K562 (cell line): ENCODE measurements at regions of chr10 and their contacts with region 1.

Region 1: GRCh38 chr10:102503281-102504220 is at the start of gene SUFU:
- DNase-seq: peak; percentile 94 to 98 (median 96)
- ATAC-seq: peak; percentile 87
- H3K4me3 ChIP-seq: peak within 1 kb of the TSS; percentile 86
- H3K27ac ChIP-seq: peak within 1 kb of the TSS; percentile 87
- H3K4me1 ChIP-seq: peaks cover 4 to 13% of the 10 kb centered on the region in 2 experiments; a peak in 4 of 5 replicates
- H3K27me3 ChIP-seq: no peaks in the 10 kb centered on the region
- CTCF ChIP-seq: peak; percentile 77 to 90 (median 84)
- EP300 ChIP-seq: no peak
- POLR2A ChIP-seq: no peak; the same call in 1 of the 2 replicates
- RAD21 ChIP-seq: peak; percentile 52 to 74
- polyA plus RNA-seq, gene SUFU: 0.59 to 0.78 TPM

Region 2: DNA sequence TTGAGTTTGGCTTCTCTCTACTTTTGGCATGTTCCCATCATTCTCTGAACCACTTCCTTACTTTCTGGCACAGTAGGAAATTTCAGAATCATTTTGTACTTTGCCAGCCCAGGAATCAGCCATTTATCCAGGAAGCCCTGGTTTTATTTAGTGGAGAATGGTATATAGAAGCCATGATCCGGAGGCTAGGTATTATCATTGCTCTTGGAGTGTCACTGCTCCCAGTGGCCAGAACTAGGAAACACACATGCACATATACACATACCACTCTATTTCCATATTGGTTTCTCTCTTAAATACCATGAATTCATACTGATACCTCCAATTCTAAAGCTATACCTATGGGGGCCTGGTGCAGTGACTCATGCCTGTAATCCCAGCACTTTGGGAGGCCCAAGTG is 36.5 kb after region 1 on chr10:
- CTCF ChIA-PET with region 1: no interaction called
- POLR2A ChIA-PET with region 1: no interaction called
- in situ Hi-C with region 1: no loop called
- intact Hi-C with region 1: loop called (anchors 2 kb)
- DNase-seq: peak; percentile 23 to 39 (median 31)
- ATAC-seq: peak; percentile 94
- H3K4me3 ChIP-seq: no peak overlapping the region
- H3K27ac ChIP-seq: no peak overlapping the region
- H3K4me1 ChIP-seq: no peaks in the 10 kb centered on the region; a peak in 1 of 5 replicates
- H3K27me3 ChIP-seq: no peaks in the 10 kb centered on the region
- CTCF ChIP-seq: peak; percentile 11 to 50 (median 41); a peak in 3 of 6 replicates
- EP300 ChIP-seq: no peak
- POLR2A ChIP-seq: no peak
- RAD21 ChIP-seq: peak in 1 of 2 experiments; percentile 38; a peak in 2 of 4 replicates

Region 3: DNA sequence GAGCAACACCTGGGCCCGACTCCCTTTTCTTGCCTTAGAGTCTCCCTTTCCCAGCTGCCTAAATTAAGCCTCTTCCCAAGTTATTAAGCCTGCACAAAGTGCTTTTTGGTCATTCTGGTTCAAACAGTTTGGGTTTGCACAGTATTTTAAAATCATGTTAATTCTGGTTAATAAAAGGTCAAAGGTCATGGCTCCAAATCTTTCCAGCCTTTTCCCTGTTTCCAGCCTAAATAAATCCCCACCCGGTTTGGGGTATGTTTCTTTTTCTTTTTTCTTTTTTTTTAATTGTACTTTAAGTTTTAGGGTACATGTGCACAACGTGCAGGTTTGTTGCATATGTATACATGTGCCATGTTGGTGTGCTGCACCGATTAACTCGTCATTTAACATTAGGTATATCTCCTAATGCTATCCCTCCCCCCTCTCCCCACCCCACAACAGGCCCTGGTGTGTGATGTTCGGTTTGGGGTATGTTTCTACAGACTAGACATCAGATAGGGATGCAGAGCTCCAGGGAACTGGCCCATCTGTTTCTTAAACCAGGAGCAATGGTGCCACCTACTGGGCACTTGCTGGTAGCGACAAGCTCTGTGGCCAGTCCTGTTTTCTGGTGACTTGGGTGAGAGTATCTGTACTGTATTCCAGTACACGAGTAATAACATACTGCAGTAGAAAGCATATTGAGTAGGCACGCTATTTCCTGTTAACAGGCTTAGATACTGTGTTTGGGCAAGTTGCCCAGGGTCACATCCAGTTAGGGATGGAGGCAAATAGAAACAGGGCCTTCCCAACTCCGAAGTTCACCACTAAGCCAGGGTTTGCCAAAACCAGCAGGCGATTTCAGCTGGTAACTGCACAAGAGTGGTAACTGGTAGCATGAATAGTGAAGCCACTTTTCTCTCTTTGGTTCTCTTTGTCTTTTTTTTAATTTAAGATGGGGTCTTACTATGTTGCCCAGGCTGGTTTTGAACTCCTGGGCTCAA is 80.2 kb after region 1 on chr10:
- CTCF ChIA-PET with region 1: interaction called, 6 read pairs
- POLR2A ChIA-PET with region 1: interaction called, 6 read pairs
- in situ Hi-C with region 1: loop called (anchors 5 kb)
- intact Hi-C with region 1: loop called (anchors 1 kb)
- DNase-seq: peak; percentile 82 to 88 (median 84)
- ATAC-seq: peak; percentile 99
- H3K4me3 ChIP-seq: no peak overlapping the region
- H3K27ac ChIP-seq: no peak overlapping the region
- H3K4me1 ChIP-seq: peaks cover 0 to 3% of the 10 kb centered on the region in 2 experiments; a peak in 2 of 5 replicates
- H3K27me3 ChIP-seq: no peaks in the 10 kb centered on the region
- CTCF ChIP-seq: peak; percentile 70 to 85 (median 77)
- EP300 ChIP-seq: no peak
- POLR2A ChIP-seq: no peak
- RAD21 ChIP-seq: peak; percentile 71 to 82

Region 4: DNA sequence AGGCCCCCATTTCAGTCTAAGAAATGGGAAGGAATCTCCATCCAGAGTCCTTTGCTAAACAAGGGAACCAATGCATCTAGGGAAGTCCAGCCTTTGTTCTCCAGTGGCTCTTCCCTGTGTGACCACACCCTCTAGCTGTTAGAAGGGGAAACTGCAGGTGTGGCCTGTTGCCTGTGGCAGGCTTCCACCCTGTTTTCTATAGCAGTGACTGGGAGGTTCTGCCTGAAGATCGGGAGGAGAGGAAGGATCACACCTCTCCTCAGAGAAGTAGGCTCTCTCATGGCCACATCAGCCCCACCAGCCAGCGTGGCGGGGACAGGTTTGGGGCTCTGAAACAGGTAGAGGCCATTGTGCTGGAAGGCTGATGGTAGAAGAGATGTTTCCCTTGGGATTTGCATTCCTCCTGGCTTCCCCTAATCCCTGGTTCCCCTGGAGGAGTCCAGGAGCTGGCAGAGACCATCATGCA is 93.0 kb after region 1 on chr10:
- CTCF ChIA-PET with region 1: no interaction called
- POLR2A ChIA-PET with region 1: no interaction called
- in situ Hi-C with region 1: no loop called
- intact Hi-C with region 1: loop called (anchors 5 kb)
- DNase-seq: peak; percentile 57 to 72 (median 61)
- ATAC-seq: peak; percentile 78
- H3K4me3 ChIP-seq: no peak overlapping the region
- H3K27ac ChIP-seq: peak overlapping the region; percentile 26; the same call in 1 of the 3 replicates
- H3K4me1 ChIP-seq: peaks cover 34 to 39% of the 10 kb centered on the region in 2 experiments
- H3K27me3 ChIP-seq: no peaks in the 10 kb centered on the region
- CTCF ChIP-seq: peak; percentile 78 to 85 (median 84)
- EP300 ChIP-seq: no peak
- POLR2A ChIP-seq: no peak
- RAD21 ChIP-seq: peak; percentile 47 to 75; a peak in 3 of 4 replicates

Region 5: DNA sequence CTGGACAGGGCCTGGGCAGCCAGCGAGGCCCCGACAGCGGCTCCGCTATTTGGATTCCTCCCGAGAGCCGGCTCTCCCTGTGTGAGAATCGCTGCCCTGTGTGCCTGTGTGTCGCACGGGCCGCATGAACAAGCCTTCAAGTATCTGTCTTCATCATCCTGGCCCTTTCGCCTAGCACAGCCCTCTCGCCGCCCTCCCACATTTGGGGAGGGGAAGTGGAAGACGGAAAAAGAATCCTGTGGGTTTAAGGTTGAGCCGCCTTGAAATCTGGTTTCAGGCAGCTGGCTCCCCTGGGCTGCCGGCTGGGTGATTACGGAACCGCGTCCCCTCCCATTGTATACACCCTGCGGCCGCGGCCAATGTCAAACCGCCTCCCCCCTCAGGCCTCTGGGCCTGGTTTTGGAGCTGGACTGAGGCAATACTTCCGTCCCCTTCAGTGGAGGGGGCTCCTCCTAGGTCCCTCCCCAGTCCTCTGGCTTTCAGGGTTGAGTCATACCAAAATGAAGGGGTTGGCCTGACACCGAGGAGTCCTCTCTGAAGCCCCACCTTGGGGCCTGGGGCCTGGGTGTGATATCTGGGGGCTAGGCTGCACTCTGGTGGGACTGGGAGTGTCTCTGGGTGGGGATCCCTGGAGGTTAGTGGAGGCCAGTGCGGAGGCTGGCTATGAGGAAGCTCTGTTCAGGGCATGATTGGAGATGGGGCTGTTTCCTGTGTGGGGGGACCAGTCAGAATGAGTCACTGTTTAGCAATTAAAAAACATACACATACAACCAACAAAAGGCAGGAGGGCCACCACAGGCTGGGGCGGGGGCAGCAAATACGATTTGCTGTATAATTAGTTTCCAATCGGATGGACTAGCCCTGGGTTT is 142.4 kb after region 1 on chr10:
- CTCF ChIA-PET with region 1: no interaction called
- POLR2A ChIA-PET with region 1: no interaction called
- in situ Hi-C with region 1: no loop called
- intact Hi-C with region 1: no loop called
- DNase-seq: peak; percentile 56 to 87 (median 66)
- ATAC-seq: peak; percentile 68
- H3K4me3 ChIP-seq: peak overlapping the region; percentile 78
- H3K27ac ChIP-seq: peak overlapping the region; percentile 89
- H3K4me1 ChIP-seq: peaks cover 6 to 77% of the 10 kb centered on the region in 2 experiments; a peak in 4 of 5 replicates
- H3K27me3 ChIP-seq: no peaks in the 10 kb centered on the region
- CTCF ChIP-seq: no peak
- EP300 ChIP-seq: no peak; the same call in none of the 2 replicates
- POLR2A ChIP-seq: peak; percentile 69
- RAD21 ChIP-seq: no peak; a peak in 1 of 4 replicates

Region 6: GRCh38 chr10:102743588-102744373 is 240.2 kb after region 1 on chr10 and contains the start of gene WBP1L:
- CTCF ChIA-PET with region 1: no interaction called
- POLR2A ChIA-PET with region 1: no interaction called
- in situ Hi-C with region 1: no loop called
- intact Hi-C with region 1: no loop called
- DNase-seq: peak; percentile 89 to 96 (median 90)
- ATAC-seq: peak; percentile 95
- H3K4me3 ChIP-seq: peak within 1 kb of the TSS; percentile 90
- H3K27ac ChIP-seq: peak within 1 kb of the TSS; percentile 72
- H3K4me1 ChIP-seq: peaks cover 9 to 28% of the 10 kb centered on the region in 2 experiments
- H3K27me3 ChIP-seq: no peaks in the 10 kb centered on the region
- CTCF ChIP-seq: peak in 1 of 3 experiments; percentile 31; a peak in 2 of 6 replicates
- EP300 ChIP-seq: no peak; the same call in 1 of the 2 replicates
- POLR2A ChIP-seq: peak; percentile 78
- RAD21 ChIP-seq: no peak
- polyA plus RNA-seq, gene WBP1L: 3.2 to 5.3 TPM